CD8-positive, alpha-beta T cell (primary cell): ENCODE measurements at regions of chr12 and their contacts with region 1.

Region 1: GRCh38 chr12:51341259-51342007 is 5.0 kb downstream of the CELA1 start:
- DNase-seq: peak; percentile 54 to 85 (median 74)
- ATAC-seq: peak; percentile 99
- H3K4me3 ChIP-seq: no peak overlapping the region
- H3K4me3 Mint-ChIP-seq: peak overlapping the region; percentile 40
- H3K27ac ChIP-seq: peak overlapping the region; percentile 6 to 47
- H3K27ac Mint-ChIP-seq: peak overlapping the region; percentile 81
- H3K4me1 ChIP-seq: peaks cover 5% of the 10 kb centered on the region
- H3K4me1 Mint-ChIP-seq: peaks cover 11% of the 10 kb centered on the region
- H3K27me3 ChIP-seq: no peaks in the 10 kb centered on the region
- H3K27me3 Mint-ChIP-seq: no peaks in the 10 kb centered on the region
- CTCF ChIP-seq: peak; percentile 99

Region 2: DNA sequence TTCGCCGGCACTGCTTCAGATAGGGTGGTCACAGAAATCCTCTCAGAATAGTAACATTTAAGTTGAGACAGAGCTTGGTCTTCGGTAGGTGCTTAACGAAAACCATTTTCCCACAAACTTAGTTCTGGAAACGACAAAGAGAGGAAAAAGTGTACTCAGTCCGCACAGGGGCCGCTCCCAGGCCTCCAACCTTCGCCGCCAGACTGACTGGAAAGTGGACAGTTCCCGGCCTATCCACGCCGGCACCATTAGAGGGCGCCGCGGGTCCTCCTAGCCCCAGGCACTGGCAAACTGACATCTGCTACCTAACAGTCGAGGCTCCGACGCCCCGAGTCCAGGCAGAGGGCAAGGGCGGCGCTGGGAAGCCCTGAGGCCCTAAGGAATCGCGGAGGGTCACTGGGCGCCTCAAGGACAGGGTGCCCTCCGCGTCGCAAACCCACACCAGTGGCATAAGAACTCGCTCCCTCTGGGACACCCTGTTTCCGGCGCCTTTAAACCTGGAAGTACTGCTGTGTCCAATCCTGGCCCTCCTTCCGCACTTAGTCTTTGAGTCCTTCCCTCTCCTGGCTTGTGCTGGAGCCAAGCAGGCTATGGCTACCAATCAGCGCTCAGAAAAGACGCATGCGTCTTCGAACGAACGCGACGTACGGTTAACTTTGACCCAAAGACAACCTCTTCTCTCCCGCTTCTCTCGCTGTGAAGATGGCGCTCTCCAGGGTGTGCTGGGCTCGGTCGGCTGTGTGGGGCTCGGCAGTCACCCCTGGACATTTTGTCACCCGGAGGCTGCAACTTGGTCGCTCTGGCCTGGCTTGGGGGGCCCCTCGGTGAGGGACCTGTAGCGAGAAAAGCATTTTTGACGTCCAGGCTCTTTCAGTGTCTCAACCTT is 293.5 kb before region 1 on chr12 and contains the start of gene LETMD1:
- CTCF ChIA-PET with region 1: interaction called, 6 read pairs
- POLR2A ChIA-PET with region 1: no interaction called
- intact Hi-C with region 1: loop called (anchors 1 to 2 kb)
- DNase-seq: peak; percentile 83 to 99 (median 88)
- ATAC-seq: peak; percentile 94
- H3K4me3 ChIP-seq: peak within 1 kb of the TSS; percentile 79 to 83
- H3K4me3 Mint-ChIP-seq: peak within 1 kb of the TSS; percentile 98
- H3K27ac ChIP-seq: peak within 1 kb of the TSS; percentile 74 to 96
- H3K27ac Mint-ChIP-seq: peak within 1 kb of the TSS; percentile 97
- H3K4me1 ChIP-seq: peaks cover 23% of the 10 kb centered on the region
- H3K4me1 Mint-ChIP-seq: peaks cover 34% of the 10 kb centered on the region
- H3K27me3 ChIP-seq: no peaks in the 10 kb centered on the region
- H3K27me3 Mint-ChIP-seq: no peaks in the 10 kb centered on the region
- CTCF ChIP-seq: peak; percentile 95
- total RNA-seq, gene LETMD1: 51.3 to 55.2 TPM

Region 3: GRCh38 chr12:51270067-51270970 is 71.1 kb before region 1 on chr12 and contains the start of gene SMAGP:
- CTCF ChIA-PET with region 1: interaction called, 89 read pairs
- POLR2A ChIA-PET with region 1: interaction called, 5 read pairs
- intact Hi-C with region 1: loop called (anchors 1 kb)
- DNase-seq: peak in 8 of 9 experiments; percentile 28 to 76 (median 52)
- ATAC-seq: peak; percentile 50
- H3K4me3 ChIP-seq: peak within 1 kb of the TSS; percentile 54 to 71
- H3K4me3 Mint-ChIP-seq: peak within 1 kb of the TSS; percentile 90
- H3K27ac ChIP-seq: peak within 1 kb of the TSS; percentile 42 to 58
- H3K27ac Mint-ChIP-seq: peak within 1 kb of the TSS; percentile 84
- H3K4me1 ChIP-seq: peaks cover 16% of the 10 kb centered on the region
- H3K4me1 Mint-ChIP-seq: peaks cover 23% of the 10 kb centered on the region
- H3K27me3 ChIP-seq: no peaks in the 10 kb centered on the region
- H3K27me3 Mint-ChIP-seq: no peaks in the 10 kb centered on the region
- CTCF ChIP-seq: no peak
- total RNA-seq, gene SMAGP: 1.9 to 2.3 TPM

Region 4: DNA sequence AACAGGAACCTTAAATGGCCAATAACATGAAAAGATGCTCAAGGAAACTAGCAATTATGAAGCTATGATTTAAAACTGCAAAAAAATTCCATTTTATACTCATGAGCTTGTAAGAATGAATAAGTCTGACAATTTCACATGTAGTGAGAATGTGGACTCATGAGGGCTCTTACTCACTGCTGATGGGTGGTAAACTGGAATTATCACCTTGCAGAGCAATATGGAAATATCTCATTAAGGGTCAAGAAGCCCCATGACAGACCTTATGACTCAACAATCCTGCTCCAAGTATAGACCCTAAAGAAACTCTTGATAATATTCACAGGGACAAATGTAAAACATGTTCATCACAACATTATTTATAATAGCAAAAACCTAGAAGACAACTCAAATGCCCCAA is 47.7 kb before region 1 on chr12:
- CTCF ChIA-PET with region 1: interaction called, 18 read pairs
- POLR2A ChIA-PET with region 1: no interaction called
- intact Hi-C with region 1: no loop called
- DNase-seq: no peak
- ATAC-seq: no peak
- H3K4me3 ChIP-seq: no peak overlapping the region
- H3K4me3 Mint-ChIP-seq: no peak overlapping the region
- H3K27ac ChIP-seq: no peak overlapping the region
- H3K27ac Mint-ChIP-seq: peak overlapping the region; percentile 55
- H3K4me1 ChIP-seq: peaks cover 4% of the 10 kb centered on the region
- H3K4me1 Mint-ChIP-seq: peaks cover 19% of the 10 kb centered on the region
- H3K27me3 ChIP-seq: no peaks in the 10 kb centered on the region
- H3K27me3 Mint-ChIP-seq: no peaks in the 10 kb centered on the region
- CTCF ChIP-seq: no peak

Region 5: DNA sequence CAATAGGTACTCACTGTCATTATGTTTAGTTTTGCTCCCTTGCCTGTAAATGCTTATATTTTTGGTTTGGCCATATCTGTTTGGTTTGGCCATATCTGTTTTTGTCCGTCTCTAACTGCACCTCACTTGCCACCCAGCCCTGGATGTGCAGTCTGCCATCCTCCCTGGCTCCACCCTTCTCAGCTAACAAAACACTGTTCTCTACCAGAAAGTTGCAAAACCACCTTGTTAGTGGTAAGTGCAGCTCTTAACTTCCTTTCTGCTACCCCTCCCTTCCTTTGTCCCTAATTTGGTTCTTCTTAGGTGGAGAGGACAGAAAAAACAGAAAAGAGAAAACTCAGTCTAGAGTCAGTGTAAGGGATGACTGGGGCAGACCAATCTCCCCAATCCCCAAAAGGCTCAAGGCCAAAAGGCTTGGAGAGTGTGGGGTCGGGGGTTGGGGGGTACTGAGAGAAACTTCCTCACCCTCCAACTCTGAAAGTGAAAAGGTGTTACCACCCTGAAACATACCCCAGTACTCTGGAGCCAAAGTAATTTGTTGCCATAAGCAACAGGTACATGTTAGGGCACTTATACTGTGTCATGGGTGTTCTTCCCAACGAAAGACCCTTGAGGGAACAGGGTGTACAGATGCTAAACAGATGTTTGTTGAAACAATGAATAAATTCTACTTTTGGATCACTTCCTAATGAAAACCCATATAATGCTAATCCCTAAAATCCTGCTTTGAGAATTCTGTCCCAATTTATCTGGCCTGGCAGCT is 22.4 kb before region 1 on chr12:
- CTCF ChIA-PET with region 1: interaction called, 61 read pairs
- POLR2A ChIA-PET with region 1: interaction called, 38 read pairs
- intact Hi-C with region 1: loop called (anchors 1 kb)
- DNase-seq: peak in 8 of 9 experiments; percentile 48 to 87 (median 67)
- ATAC-seq: peak; percentile 75
- H3K4me3 ChIP-seq: peak overlapping the region; percentile 13 to 26
- H3K4me3 Mint-ChIP-seq: peak overlapping the region; percentile 75
- H3K27ac ChIP-seq: peak overlapping the region; percentile 56 to 94
- H3K27ac Mint-ChIP-seq: peak overlapping the region; percentile 95
- H3K4me1 ChIP-seq: peaks cover 61% of the 10 kb centered on the region
- H3K4me1 Mint-ChIP-seq: peaks cover 77% of the 10 kb centered on the region
- H3K27me3 ChIP-seq: no peaks in the 10 kb centered on the region
- H3K27me3 Mint-ChIP-seq: no peaks in the 10 kb centered on the region
- CTCF ChIP-seq: no peak

Region 6: DNA sequence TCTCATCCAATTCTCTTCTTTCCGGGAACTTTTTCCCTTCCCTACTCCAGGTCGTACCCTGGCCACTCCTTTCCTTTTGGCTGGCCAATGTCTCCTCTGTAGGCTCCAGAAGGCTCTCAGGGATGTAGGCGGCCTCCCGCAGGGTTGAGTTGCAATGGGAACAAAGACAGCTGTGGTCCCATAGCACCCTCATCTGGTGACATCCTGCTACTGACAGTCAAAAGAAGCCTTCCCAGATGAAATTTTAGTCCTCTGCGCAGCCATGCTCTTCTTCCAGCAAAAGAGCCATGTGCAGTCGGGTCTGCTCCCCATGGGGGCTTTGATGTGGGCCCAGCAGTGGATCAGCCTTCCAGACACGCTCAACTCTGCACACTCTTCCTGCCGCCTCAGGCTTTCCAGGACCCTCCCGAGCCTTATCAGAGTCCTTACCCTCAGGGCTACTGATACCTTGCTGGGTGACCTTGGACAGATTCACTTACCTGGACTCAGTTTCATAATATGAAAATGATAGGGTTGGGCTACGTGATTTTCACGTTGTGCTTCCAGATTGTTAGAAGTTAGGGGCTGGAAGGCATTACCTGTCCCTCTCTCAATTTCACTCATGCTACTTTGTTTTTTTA is 10.6 kb after region 1 on chr12:
- CTCF ChIA-PET with region 1: interaction called, 28 read pairs
- POLR2A ChIA-PET with region 1: interaction called, 8 read pairs
- intact Hi-C with region 1: no loop called
- DNase-seq: peak in 7 of 9 experiments; percentile 9 to 72 (median 43)
- ATAC-seq: peak; percentile 77
- H3K4me3 ChIP-seq: no peak overlapping the region
- H3K4me3 Mint-ChIP-seq: no peak overlapping the region
- H3K27ac ChIP-seq: no peak overlapping the region
- H3K27ac Mint-ChIP-seq: no peak overlapping the region
- H3K4me1 ChIP-seq: no peaks in the 10 kb centered on the region
- H3K4me1 Mint-ChIP-seq: peaks cover 2% of the 10 kb centered on the region
- H3K27me3 ChIP-seq: no peaks in the 10 kb centered on the region
- H3K27me3 Mint-ChIP-seq: no peaks in the 10 kb centered on the region
- CTCF ChIP-seq: peak; percentile 73

Region 7: DNA sequence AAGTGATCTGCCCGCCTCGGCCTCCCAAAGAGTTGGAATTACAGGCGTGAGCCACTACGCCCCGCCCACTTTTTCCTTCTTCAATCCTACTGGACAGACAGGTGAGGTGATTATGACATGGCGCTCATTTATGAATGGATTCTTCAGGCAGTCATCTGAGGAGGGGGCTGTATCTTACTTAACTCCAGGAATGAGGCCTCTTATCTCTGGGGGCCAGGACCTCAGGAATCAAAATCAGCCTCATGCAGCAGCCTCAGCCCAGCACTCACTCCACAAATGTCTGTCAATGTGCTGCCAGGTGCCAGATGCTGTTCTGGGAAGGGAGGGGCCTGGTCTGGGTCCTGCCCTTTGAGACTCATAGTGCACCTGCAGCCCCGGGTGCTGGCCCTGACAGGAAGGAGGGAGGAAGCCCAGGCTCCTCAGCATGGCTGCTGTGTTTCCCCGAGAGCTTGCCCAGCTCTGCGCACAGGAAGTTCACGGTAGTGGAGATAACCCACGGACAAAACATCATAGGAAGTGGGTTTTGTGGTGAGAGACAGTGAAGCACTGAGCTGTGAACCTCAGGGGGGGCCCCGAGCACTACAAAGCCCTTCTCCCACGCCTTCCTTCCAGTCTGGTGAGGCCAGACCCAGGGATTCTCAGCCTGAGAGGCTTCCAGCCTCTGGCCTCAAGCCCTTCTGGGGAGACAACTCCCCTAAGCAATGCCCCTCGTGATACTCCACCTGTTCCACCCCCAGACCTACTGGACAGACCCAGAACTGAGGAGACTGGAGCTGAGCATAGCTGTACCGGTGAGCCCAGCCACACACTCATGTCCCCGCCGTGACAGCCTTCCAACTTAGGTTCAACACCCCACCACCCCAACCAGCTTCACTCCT is 27.4 kb after region 1 on chr12:
- CTCF ChIA-PET with region 1: interaction called, 8 read pairs
- POLR2A ChIA-PET with region 1: interaction called, 4 read pairs
- intact Hi-C with region 1: loop called in 1 of 2 experiments (anchors 1 kb)
- DNase-seq: peak; percentile 78 to 98 (median 88)
- ATAC-seq: peak; percentile 93
- H3K4me3 ChIP-seq: peak overlapping the region; percentile 38 to 49
- H3K4me3 Mint-ChIP-seq: peak overlapping the region; percentile 63
- H3K27ac ChIP-seq: peak overlapping the region; percentile 32 to 66
- H3K27ac Mint-ChIP-seq: peak overlapping the region; percentile 75
- H3K4me1 ChIP-seq: peaks cover 36% of the 10 kb centered on the region
- H3K4me1 Mint-ChIP-seq: peaks cover 49% of the 10 kb centered on the region
- H3K27me3 ChIP-seq: no peaks in the 10 kb centered on the region
- H3K27me3 Mint-ChIP-seq: no peaks in the 10 kb centered on the region
- CTCF ChIP-seq: no peak

Region 8: GRCh38 chr12:51823875-51824565 is 482.6 kb after region 1 on chr12:
- CTCF ChIA-PET with region 1: no interaction called
- POLR2A ChIA-PET with region 1: no interaction called
- intact Hi-C with region 1: no loop called
- DNase-seq: peak in 4 of 9 experiments; percentile 22 to 71 (median 45)
- ATAC-seq: no peak
- H3K4me3 ChIP-seq: no peak overlapping the region
- H3K4me3 Mint-ChIP-seq: no peak overlapping the region
- H3K27ac ChIP-seq: peak overlapping the region in 1 of 2 experiments; percentile 15
- H3K27ac Mint-ChIP-seq: peak overlapping the region; percentile 62
- H3K4me1 ChIP-seq: peaks cover 23% of the 10 kb centered on the region
- H3K4me1 Mint-ChIP-seq: peaks cover 41% of the 10 kb centered on the region
- H3K27me3 ChIP-seq: no peaks in the 10 kb centered on the region
- H3K27me3 Mint-ChIP-seq: no peaks in the 10 kb centered on the region
- CTCF ChIP-seq: peak; percentile 18